ENCODE measurements at regions of chrX and their contacts with region 1.

Region 1: GRCh38 chrX:118495061-118495921 is at the start of gene DOCK11:
- DNase-seq: peak; percentile 42 to 82 (median 77)
- ATAC-seq: peak; percentile 87
- H3K4me3 ChIP-seq: peak within 1 kb of the TSS; percentile 90
- H3K4me3 Mint-ChIP-seq: peak within 1 kb of the TSS; percentile 89 to 100 (median 98)
- H3K27ac ChIP-seq: peak within 1 kb of the TSS; percentile 87
- H3K27ac Mint-ChIP-seq: peak within 1 kb of the TSS; percentile 90 to 99 (median 97)
- H3K4me1 ChIP-seq: peaks cover 15 to 25% of the 10 kb centered on the region in 2 donors
- H3K4me1 Mint-ChIP-seq: peaks cover 13 to 29% (median 24%) of the 10 kb centered on the region in 7 donors
- H3K27me3 ChIP-seq: no peaks in the 10 kb centered on the region
- H3K27me3 Mint-ChIP-seq: no peaks in the 10 kb centered on the region
- total RNA-seq, gene DOCK11: 68.9 to 115 (median 102) TPM

Region 2: DNA sequence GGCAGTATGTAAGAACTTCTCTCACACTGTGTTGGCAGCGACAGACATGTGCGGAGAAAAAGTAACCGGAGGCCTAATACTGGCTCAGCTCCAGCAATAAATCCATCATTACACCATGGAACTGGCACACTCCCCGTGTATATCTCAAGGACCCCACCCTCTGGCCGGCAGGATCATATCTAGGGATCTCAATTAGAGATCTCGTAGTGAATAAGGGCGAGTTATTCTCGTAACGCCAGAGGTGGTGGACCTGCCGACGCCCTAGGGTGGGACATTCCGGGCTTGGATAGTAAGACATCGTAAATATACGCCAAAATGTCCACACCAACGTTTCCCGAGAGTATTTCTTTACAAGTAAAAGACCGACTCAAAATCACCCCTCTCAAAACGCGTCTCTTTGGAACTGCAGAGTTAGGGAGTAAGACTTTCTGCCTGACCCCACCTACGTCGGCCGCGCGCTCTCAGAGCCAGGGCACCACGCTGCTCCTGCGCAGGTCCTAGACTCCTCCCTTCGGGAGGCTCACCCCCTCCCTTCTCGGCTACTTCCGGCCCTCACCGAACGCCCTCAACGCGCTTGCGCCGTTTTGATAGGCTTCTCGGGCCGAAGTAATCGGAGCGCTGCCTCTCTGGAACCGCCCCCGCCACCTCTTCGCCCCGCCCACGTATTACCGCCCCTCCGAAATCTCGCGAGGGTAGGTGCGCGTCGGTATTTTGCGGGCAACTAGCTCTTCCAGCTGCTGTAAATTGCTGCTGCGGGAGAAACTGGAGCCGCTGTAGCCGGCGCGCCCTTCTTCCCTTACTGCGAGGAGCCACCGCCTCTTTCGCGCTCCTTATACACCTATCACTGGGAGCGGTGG is 149.7 kb before region 1 on chrX and contains the start of gene WDR44:
- CTCF ChIA-PET with region 1: no interaction called
- POLR2A ChIA-PET with region 1: interaction called, 3 read pairs
- intact Hi-C with region 1: loop called (anchors 1 kb)
- DNase-seq: peak; percentile 79 to 95 (median 92)
- ATAC-seq: peak; percentile 95
- H3K4me3 ChIP-seq: peak within 1 kb of the TSS; percentile 87
- H3K4me3 Mint-ChIP-seq: peak within 1 kb of the TSS; percentile 87 to 99 (median 98)
- H3K27ac ChIP-seq: peak within 1 kb of the TSS; percentile 93
- H3K27ac Mint-ChIP-seq: peak within 1 kb of the TSS; percentile 92 to 99 (median 96)
- H3K4me1 ChIP-seq: peaks cover 19 to 24% of the 10 kb centered on the region in 2 donors
- H3K4me1 Mint-ChIP-seq: peaks cover 5 to 40% (median 36%) of the 10 kb centered on the region in 7 donors
- H3K27me3 ChIP-seq: no peaks in the 10 kb centered on the region
- H3K27me3 Mint-ChIP-seq: no peaks in the 10 kb centered on the region
- total RNA-seq, gene WDR44: 12.0 to 19.0 (median 17.0) TPM

Region 3: GRCh38 chrX:118508635-118509034 is 13.3 kb after region 1 on chrX:
- CTCF ChIA-PET with region 1: no interaction called
- POLR2A ChIA-PET with region 1: interaction called, 28 read pairs
- intact Hi-C with region 1: no loop called
- DNase-seq: no peak
- ATAC-seq: no peak
- H3K4me3 ChIP-seq: no peak overlapping the region
- H3K4me3 Mint-ChIP-seq: peak overlapping the region in 6 of 10 donors; percentile 0 to 64 (median 34)
- H3K27ac ChIP-seq: no peak overlapping the region
- H3K27ac Mint-ChIP-seq: peak overlapping the region in 7 of 9 donors; percentile 49 to 81 (median 75)
- H3K4me1 ChIP-seq: peaks cover 47 to 53% of the 10 kb centered on the region in 2 donors
- H3K4me1 Mint-ChIP-seq: peaks cover 30 to 91% (median 80%) of the 10 kb centered on the region in 7 donors
- H3K27me3 ChIP-seq: no peaks in the 10 kb centered on the region
- H3K27me3 Mint-ChIP-seq: no peaks in the 10 kb centered on the region

Region 4: DNA sequence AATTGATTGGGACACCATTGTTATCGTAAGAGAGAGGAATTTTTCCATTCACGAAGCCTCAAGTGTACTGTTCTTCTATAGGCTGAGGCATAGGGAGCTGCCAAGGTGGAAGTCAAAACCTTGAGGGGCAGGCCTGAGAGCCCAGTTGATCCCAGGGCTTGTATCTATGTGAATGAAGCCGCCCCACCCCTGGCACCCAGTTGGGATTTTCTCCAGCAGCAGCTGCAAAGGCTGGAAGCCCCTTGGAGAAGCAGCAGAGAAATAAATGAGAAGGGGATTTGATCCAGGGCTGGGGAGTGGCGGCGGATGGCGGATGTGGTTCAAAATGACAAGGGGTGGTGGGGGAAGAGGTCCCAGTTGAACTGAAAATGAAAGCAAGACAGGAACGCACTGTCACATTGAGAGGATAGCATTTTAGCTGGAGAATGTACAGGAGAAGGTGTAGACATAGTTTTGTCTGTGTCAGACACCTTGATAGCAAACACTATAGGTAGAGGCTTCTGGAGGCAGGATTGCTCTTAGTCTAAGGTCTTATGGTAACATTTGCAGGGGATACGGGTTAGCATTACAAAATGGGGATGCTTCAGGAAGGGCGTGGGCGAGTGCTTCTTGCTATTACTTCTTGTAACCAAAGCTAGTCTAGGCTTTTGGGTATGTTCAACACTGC is 32.9 kb after region 1 on chrX:
- CTCF ChIA-PET with region 1: interaction called, 3 read pairs
- POLR2A ChIA-PET with region 1: interaction called, 167 read pairs
- intact Hi-C with region 1: loop called (anchors 1 kb)
- DNase-seq: peak in 8 of 9 donors; percentile 41 to 73 (median 68)
- ATAC-seq: peak; percentile 82
- H3K4me3 ChIP-seq: peak overlapping the region; percentile 65
- H3K4me3 Mint-ChIP-seq: peak overlapping the region; percentile 83 to 97 (median 90)
- H3K27ac ChIP-seq: peak overlapping the region; percentile 75
- H3K27ac Mint-ChIP-seq: peak overlapping the region; percentile 89 to 100 (median 96)
- H3K4me1 ChIP-seq: peaks cover 54 to 61% of the 10 kb centered on the region in 2 donors
- H3K4me1 Mint-ChIP-seq: peaks cover 48 to 83% (median 75%) of the 10 kb centered on the region in 7 donors
- H3K27me3 ChIP-seq: no peaks in the 10 kb centered on the region
- H3K27me3 Mint-ChIP-seq: no peaks in the 10 kb centered on the region

Region 5: DNA sequence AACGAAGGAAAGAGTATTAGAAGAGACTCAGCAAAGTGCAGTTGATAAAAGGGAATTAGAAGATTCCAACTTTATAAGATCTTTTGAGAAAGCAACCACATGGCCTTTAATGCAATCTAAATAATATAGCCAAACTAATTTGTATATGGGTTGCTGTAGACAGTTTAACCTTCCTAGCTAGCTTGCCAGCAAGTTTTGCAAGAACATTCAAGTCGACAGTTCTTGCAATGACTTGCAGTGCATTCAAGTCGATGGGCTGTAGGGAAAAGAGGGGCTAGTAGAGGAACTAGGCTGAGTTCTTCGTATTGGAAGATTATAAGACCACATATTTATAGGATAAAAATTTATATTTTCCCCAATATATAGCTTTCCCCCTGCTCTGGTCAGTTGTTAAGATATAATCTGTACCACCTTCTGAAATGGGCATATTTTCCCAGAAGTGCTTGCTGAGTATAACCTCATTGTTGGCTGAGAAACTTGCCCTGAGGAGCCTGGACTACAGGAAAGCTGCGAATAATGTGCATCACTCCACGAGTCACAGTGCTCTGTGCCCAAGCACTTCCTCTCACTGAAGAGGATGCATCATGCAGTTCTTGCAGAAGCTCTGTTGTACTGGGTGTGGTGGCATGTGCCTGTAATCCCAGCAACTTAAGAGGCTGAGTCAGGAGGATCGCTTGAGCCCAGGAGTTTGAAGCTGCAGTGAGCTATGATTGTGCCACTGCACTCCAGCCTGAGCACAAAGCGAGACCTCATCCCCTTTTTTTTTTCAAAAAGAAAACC is 57.0 kb after region 1 on chrX:
- CTCF ChIA-PET with region 1: no interaction called
- POLR2A ChIA-PET with region 1: interaction called, 12 read pairs
- intact Hi-C with region 1: no loop called
- DNase-seq: no peak
- ATAC-seq: peak; percentile 74
- H3K4me3 ChIP-seq: no peak overlapping the region
- H3K4me3 Mint-ChIP-seq: no peak overlapping the region
- H3K27ac ChIP-seq: no peak overlapping the region
- H3K27ac Mint-ChIP-seq: peak overlapping the region in 4 of 9 donors; percentile 21 to 67 (median 42)
- H3K4me1 ChIP-seq: no peaks in the 10 kb centered on the region
- H3K4me1 Mint-ChIP-seq: peaks cover 4 to 30% (median 11%) of the 10 kb centered on the region in 7 donors
- H3K27me3 ChIP-seq: no peaks in the 10 kb centered on the region
- H3K27me3 Mint-ChIP-seq: no peaks in the 10 kb centered on the region

Region 6: DNA sequence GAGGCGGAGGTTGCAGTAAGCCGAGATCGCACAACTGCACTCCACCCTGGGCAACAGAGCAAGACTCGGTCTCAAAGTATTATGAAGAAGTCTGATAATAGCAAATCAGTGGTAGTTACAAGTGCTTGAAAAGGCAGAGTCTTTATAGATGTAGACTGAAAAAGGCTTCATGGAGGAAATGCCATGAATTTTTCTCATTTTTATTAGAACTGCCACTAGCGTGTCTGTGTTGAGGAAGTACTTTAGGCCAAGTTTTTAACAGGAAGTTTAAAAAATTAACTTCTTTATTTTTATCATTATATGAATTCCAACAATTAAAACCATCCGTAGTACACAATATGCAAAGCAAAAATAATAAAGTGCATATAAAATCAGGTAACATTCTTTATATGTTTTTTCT is 199.3 kb after region 1 on chrX:
- CTCF ChIA-PET with region 1: no interaction called
- POLR2A ChIA-PET with region 1: interaction called, 10 read pairs
- intact Hi-C with region 1: no loop called
- DNase-seq: no peak
- ATAC-seq: no peak
- H3K4me3 ChIP-seq: no peak overlapping the region
- H3K4me3 Mint-ChIP-seq: no peak overlapping the region
- H3K27ac ChIP-seq: no peak overlapping the region
- H3K27ac Mint-ChIP-seq: peak overlapping the region in 4 of 9 donors; percentile 21 to 69 (median 43)
- H3K4me1 ChIP-seq: no peaks in the 10 kb centered on the region
- H3K4me1 Mint-ChIP-seq: peaks cover 0 to 5% (median 0%) of the 10 kb centered on the region in 7 donors
- H3K27me3 ChIP-seq: no peaks in the 10 kb centered on the region
- H3K27me3 Mint-ChIP-seq: no peaks in the 10 kb centered on the region